ENCODE measurements at regions of chr11 and their contacts with region 1.

Region 1: DNA sequence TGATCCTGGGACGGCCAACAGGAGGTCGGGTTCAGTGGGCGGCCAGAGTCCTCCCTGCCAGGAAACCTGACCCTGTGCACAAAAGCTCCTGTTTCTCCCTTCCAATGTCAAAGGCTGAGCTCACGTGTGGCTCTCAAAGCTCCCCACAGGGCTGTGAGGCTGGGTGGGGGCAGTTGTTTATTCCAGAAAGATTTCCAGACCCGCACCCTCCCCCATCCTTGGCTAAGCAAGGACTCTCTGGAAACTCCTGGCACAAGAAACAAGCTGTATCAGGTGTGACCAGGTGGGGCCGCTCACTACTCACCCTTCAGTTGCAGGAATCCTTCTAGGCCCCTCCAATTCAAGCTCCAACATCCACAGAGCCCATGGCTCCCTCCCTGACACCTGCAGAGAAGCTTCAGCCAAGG is 131.9 kb downstream of the SHANK2 start:
- DNase-seq: peak; percentile 62
- H3K4me3 Mint-ChIP-seq: no peak overlapping the region
- H3K27ac Mint-ChIP-seq: no peak overlapping the region
- H3K4me1 Mint-ChIP-seq: no peaks in the 10 kb centered on the region
- H3K27me3 Mint-ChIP-seq: no peaks in the 10 kb centered on the region
- CTCF ChIP-seq: peak; percentile 40

Region 2: DNA sequence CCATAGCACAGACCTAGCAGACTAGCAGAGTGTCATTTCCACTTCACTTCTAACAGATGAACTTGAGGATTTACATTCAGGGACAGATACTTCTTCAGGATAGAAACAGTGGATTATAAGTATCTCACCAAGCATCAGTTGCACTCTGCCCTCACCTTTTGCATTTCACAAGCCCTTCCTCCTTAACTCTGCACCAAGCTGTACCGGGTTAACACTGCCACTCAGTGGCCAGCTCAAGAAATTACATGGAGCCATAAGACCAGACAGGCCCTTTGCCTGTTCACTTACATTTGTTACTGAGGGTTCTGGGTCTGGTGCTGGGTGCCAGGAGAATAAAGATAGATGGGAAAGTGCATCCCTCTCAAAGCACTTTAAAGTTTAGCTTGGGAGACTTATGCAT is 177.9 kb before region 1 on chr11:
- CTCF ChIA-PET with region 1: no interaction called
- intact Hi-C with region 1: no loop called
- DNase-seq: no peak
- H3K4me3 Mint-ChIP-seq: no peak overlapping the region
- H3K27ac Mint-ChIP-seq: no peak overlapping the region
- H3K4me1 Mint-ChIP-seq: no peaks in the 10 kb centered on the region
- H3K27me3 Mint-ChIP-seq: no peaks in the 10 kb centered on the region
- CTCF ChIP-seq: no peak

Region 3: GRCh38 chr11:71329165-71329510 is 208.6 kb after region 1 on chr11:
- CTCF ChIA-PET with region 1: interaction called, 11 read pairs
- intact Hi-C with region 1: no loop called
- DNase-seq: no peak
- H3K4me3 Mint-ChIP-seq: no peak overlapping the region
- H3K27ac Mint-ChIP-seq: no peak overlapping the region
- H3K4me1 Mint-ChIP-seq: no peaks in the 10 kb centered on the region
- H3K27me3 Mint-ChIP-seq: peaks cover 13% of the 10 kb centered on the region
- CTCF ChIP-seq: no peak

Region 4: GRCh38 chr11:71342951-71343827 is 222.7 kb after region 1 on chr11:
- CTCF ChIA-PET with region 1: no interaction called
- intact Hi-C with region 1: loop called (anchors 2 kb)
- DNase-seq: peak; percentile 76
- H3K4me3 Mint-ChIP-seq: no peak overlapping the region
- H3K27ac Mint-ChIP-seq: no peak overlapping the region
- H3K4me1 Mint-ChIP-seq: no peaks in the 10 kb centered on the region
- H3K27me3 Mint-ChIP-seq: peaks cover 64% of the 10 kb centered on the region
- CTCF ChIP-seq: peak; percentile 84